Sciatic nerve (tissue), 2 donors: ENCODE measurements at regions of chr2 and their contacts with region 1.

Region 1: GRCh38 chr2:46296840-46297545 is at the start of gene EPAS1:
- DNase-seq: peak; percentile 97
- ATAC-seq: peak; percentile 89
- total RNA-seq, gene EPAS1: 270 TPM

Region 2: DNA sequence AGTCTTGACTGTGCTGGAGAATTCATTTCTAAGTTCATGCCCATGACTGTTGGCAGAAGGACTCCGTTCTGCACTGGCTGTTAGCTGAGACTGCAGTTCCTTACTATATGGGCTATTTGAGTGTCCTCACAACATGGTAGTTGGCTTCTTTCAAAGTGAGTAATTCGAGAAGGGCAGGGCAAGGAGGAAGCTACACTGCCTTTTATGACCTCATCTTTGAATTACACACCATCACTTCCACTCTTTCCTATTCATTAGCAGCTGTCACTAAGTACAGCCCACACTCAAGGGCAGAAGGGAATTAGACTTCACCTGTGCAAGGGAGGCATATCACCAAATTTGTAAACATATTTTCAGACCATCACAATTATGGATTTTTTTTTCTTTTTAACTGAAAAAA is 55.6 kb before region 1 on chr2:
- intact Hi-C with region 1: no loop called
- DNase-seq: no peak
- ATAC-seq: no peak

Region 3: GRCh38 chr2:46335391-46336282 is 38.6 kb after region 1 on chr2:
- intact Hi-C with region 1: loop called (anchors 5 kb)
- DNase-seq: peak; percentile 70
- ATAC-seq: peak; percentile 57

Region 4: DNA sequence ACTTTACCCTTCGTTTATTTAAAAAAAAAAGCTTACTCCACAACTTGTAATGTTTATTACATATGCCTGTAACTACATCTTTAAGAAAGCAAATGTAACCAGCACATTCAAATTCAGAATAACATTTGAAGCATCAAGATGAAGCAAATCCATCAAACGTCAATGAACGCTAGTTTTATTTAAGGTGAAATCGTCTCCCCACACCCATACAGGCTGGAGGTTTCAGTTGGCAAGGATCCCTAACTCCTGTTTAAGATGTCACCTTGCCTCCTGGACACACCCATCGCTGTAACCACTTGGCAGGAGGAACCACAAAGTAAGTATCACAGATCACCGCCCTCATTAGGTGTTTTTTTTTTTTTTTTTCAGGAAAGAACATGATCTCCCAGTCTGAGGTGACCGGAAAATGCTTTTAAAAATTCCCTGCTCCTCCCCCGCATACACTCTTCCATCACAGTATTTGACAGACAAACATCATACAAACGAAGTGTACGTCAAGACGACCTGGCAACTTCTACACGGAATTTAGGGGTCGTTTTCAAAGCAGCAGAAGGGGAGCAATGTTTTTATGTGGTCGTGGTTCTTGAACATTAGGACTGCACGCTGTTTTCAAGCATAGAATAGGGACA is 877.9 kb after region 1 on chr2:
- intact Hi-C with region 1: no loop called
- DNase-seq: no peak
- ATAC-seq: no peak